Natural killer cell (primary cell): ENCODE measurements at regions of chr17 and their contacts with region 1.

Region 1: DNA sequence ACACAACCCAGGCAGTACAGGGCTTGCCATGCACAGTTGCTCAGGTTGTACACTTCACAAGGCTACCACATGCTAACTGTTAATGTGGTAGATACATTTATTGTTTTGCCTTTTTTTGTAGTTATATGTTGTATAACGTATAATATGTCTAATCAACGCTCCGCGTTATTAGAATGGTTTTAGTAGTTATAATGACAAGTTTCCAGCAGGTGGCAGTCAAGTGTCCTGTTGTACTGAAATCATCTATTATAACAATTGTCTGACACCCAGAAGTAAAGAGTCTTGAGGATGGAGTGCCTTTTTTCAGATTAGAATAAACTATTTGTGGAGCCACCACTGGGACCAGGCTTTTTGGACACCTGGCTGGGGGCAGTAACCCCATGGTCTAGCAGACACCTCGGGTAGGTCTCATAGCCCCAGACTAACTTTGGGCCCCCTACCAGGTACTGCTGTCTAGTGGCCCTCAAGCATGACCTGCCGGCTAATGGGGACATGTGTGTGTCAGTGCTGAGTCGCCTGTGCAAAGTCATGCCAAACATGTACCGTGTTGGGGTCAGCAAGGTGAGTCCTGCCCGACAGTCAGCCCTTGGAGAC is 32.8 kb downstream of the MYO15A start:
- DNase-seq: peak in 1 of 2 donors; percentile 82
- ATAC-seq: peak; percentile 55 to 93 (median 77)
- H3K4me3 ChIP-seq: no peak overlapping the region
- H3K4me3 Mint-ChIP-seq: no peak overlapping the region
- H3K27ac ChIP-seq: no peak overlapping the region
- H3K27ac Mint-ChIP-seq: no peak overlapping the region
- H3K4me1 ChIP-seq: no peaks in the 10 kb centered on the region
- H3K4me1 Mint-ChIP-seq: peaks cover 5 to 6% of the 10 kb centered on the region in 2 donors
- H3K27me3 ChIP-seq: no peaks in the 10 kb centered on the region
- H3K27me3 Mint-ChIP-seq: no peaks in the 10 kb centered on the region
- CTCF ChIP-seq: peak; percentile 66

Region 2: GRCh38 chr17:17877529-17878358 is 263.6 kb before region 1 on chr17:
- intact Hi-C with region 1: no loop called
- DNase-seq: no peak
- ATAC-seq: no peak
- H3K4me3 ChIP-seq: no peak overlapping the region
- H3K4me3 Mint-ChIP-seq: no peak overlapping the region
- H3K27ac ChIP-seq: no peak overlapping the region
- H3K27ac Mint-ChIP-seq: no peak overlapping the region
- H3K4me1 ChIP-seq: no peaks in the 10 kb centered on the region
- H3K4me1 Mint-ChIP-seq: peaks cover 0 to 3% of the 10 kb centered on the region in 2 donors
- H3K27me3 ChIP-seq: no peaks in the 10 kb centered on the region
- H3K27me3 Mint-ChIP-seq: no peaks in the 10 kb centered on the region
- CTCF ChIP-seq: no peak

Region 3: DNA sequence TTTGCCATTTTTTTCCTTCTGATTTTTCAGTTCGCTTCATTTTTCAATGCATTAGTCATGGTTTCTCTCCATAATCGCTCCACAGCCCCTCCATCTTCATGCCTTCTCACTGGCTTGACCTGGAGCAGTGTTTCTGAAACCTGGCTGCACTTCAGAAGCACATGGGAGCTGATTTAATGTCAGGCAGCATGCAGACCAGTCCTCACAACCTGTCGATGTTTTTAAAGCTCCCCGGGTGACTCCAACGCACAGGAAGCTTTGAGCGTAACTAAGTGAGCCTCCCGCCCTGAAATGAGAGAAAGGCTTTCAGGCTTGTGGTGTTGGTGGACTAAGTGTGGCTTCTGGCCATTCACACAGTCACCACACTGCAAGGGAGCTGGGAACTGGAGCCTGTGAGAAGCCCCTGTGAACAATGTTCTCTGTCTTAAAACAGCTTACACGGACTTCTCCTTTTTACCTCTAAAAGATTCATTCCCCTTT is 70.4 kb before region 1 on chr17:
- intact Hi-C with region 1: no loop called
- DNase-seq: no peak
- ATAC-seq: peak; percentile 41 to 85 (median 64)
- H3K4me3 ChIP-seq: no peak overlapping the region
- H3K4me3 Mint-ChIP-seq: peak overlapping the region; percentile 61
- H3K27ac ChIP-seq: no peak overlapping the region
- H3K27ac Mint-ChIP-seq: peak overlapping the region; percentile 15 to 32
- H3K4me1 ChIP-seq: peaks cover 8% of the 10 kb centered on the region
- H3K4me1 Mint-ChIP-seq: peaks cover 14 to 15% of the 10 kb centered on the region in 2 donors
- H3K27me3 ChIP-seq: peaks cover 1% of the 10 kb centered on the region
- H3K27me3 Mint-ChIP-seq: peaks cover 5 to 7% of the 10 kb centered on the region in 2 donors
- CTCF ChIP-seq: no peak

Region 4: DNA sequence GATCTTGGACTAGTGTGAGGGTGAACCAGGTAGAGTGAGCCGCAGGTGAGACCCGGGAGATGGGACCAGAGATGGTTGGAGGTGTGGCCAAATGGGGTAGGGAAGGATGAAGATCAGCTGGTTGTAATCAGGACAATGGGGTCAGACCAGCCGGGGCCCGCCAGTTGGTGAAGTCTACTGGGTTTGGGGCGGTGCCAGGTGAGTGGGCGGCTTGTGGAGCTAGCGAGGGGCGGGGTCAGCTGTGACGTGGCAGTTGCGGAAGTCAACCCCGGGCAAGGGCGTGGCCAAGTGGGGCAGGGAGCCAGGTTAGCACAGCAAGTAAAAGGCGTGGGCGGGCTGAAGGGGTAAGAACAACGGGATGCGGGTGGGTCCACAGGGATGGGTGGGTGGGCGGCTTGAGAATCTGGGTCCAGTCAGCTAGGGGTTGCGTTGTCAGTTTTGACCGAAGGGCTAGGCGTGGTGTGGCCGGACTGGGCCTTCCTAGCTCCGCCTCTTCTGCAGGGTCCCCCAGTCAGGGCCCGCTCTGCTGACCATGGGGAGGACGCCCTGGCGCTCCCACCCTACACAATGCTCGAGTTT is 16.8 kb after region 1 on chr17:
- intact Hi-C with region 1: loop called (anchors 2 kb)
- DNase-seq: peak; percentile 89 to 96
- ATAC-seq: peak; percentile 88 to 92 (median 91)
- H3K4me3 ChIP-seq: peak overlapping the region; percentile 43
- H3K4me3 Mint-ChIP-seq: peak overlapping the region; percentile 93
- H3K27ac ChIP-seq: peak overlapping the region; percentile 44
- H3K27ac Mint-ChIP-seq: peak overlapping the region; percentile 84 to 94
- H3K4me1 ChIP-seq: peaks cover 21% of the 10 kb centered on the region
- H3K4me1 Mint-ChIP-seq: peaks cover 6 to 15% of the 10 kb centered on the region in 2 donors
- H3K27me3 ChIP-seq: no peaks in the 10 kb centered on the region
- H3K27me3 Mint-ChIP-seq: no peaks in the 10 kb centered on the region
- CTCF ChIP-seq: no peak

Region 5: DNA sequence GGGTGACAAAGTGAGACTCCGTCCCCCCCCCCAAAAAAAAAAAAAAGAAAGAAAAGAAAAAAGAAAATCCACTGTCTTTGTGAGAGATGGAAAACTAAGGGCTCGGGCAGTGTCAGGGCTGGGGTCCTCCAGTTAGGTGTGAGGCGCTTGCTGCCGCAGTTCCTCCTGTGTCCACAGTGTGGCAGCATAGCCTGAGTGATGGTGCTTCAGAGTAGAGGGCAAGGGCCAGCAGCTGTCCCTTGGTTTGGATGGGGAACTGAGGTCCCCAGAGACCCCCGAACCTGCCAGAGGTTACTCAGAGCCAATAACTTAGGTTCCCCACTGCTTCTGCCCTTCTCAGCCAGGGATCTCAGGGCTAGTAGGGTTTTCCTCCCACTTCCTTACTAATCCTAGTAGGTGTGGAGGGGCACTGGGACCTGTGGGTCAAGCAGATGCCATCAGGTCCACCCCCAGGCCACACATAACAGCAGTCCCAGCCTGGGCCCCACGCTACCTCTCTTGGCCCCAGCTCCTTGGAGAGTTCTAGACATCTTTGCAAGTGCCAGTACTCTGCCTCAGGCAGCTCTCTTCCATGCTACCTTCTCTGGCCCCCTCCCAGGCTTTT is 76.2 kb after region 1 on chr17:
- intact Hi-C with region 1: loop called (anchors 1 kb)
- DNase-seq: peak; percentile 69 to 83
- ATAC-seq: peak; percentile 86 to 100 (median 96)
- H3K4me3 ChIP-seq: no peak overlapping the region
- H3K4me3 Mint-ChIP-seq: no peak overlapping the region
- H3K27ac ChIP-seq: no peak overlapping the region
- H3K27ac Mint-ChIP-seq: peak overlapping the region in 1 of 2 donors; percentile 24
- H3K4me1 ChIP-seq: no peaks in the 10 kb centered on the region
- H3K4me1 Mint-ChIP-seq: peaks cover 0 to 7% of the 10 kb centered on the region in 2 donors
- H3K27me3 ChIP-seq: no peaks in the 10 kb centered on the region
- H3K27me3 Mint-ChIP-seq: no peaks in the 10 kb centered on the region
- CTCF ChIP-seq: peak; percentile 83